Activated CD4-positive, alpha-beta memory T cell treated with anti-CD3 and anti-CD28 coated beads for 36 hours (primary cell): ENCODE measurements at regions of chr10 and their contacts with region 1.

Region 1: DNA sequence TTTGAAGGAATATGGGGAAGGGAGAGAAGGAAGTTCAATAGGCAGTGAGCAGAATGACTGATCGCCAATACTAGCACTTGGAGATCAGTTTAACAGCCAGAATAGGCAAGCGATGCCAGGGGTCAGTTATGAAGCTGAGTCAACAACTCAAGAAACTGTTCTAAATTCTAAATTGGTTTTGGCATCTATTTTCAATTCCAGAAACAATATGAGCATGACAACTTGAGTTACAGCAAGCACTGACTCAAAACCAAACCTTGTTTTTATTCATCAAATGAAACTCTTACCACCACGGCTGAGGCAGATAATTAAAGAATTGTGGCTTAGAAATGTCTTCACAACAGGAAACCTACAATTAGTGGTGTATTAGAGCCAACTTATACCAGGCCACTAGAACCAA is 180.5 kb upstream of the ASAH2 start:
- DNase-seq: peak; percentile 39
- H3K4me3 Mint-ChIP-seq: no peak overlapping the region
- H3K27ac Mint-ChIP-seq: no peak overlapping the region
- H3K4me1 Mint-ChIP-seq: peaks cover 31% of the 10 kb centered on the region
- H3K27me3 Mint-ChIP-seq: no peaks in the 10 kb centered on the region

Region 2: DNA sequence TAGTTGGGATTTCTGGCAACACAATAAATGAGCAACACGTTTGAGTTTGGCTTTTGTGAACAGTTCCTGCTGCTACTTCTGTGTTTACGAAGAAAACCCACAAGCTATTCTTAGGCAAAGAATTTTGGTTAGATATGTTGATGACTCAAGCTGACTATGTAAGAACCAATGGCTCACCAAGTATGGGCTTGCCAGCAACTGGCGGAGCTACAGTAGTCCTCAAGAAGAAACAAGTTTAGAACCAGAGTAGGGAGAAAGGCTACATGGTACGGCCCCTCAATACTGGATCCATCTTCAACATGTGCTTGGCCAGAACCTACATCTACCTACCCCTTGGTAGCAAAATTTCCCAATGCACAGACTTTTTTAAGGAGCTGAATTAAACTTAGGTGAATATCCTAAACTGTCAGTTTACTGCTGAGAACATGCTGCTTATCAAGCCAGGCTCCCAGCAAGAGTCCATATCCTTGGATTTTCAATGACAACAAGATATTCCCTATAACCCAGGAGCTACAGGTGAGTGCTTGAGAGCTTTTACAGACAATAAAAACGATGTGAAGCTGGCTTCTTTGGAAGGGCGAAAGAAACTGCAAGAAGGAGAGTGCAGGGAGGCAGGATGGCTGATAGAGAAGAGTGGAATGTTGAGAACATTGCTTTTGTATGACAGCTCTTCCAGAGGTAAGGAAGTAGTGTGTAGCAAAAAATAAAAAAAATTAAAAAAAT is 106.2 kb before region 1 on chr10:
- CTCF ChIA-PET with region 1: no interaction called
- POLR2A ChIA-PET with region 1: no interaction called
- intact Hi-C with region 1: loop called (anchors 5 kb)
- DNase-seq: no peak
- H3K4me3 Mint-ChIP-seq: no peak overlapping the region
- H3K27ac Mint-ChIP-seq: no peak overlapping the region
- H3K4me1 Mint-ChIP-seq: peaks cover 7% of the 10 kb centered on the region
- H3K27me3 Mint-ChIP-seq: no peaks in the 10 kb centered on the region

Region 3: GRCh38 chr10:50396491-50397311 is 35.1 kb before region 1 on chr10:
- CTCF ChIA-PET with region 1: interaction called, 3 read pairs
- POLR2A ChIA-PET with region 1: interaction called, 5 read pairs
- intact Hi-C with region 1: loop called (anchors 1 kb)
- DNase-seq: peak; percentile 51
- H3K4me3 Mint-ChIP-seq: peak overlapping the region; percentile 17
- H3K27ac Mint-ChIP-seq: peak overlapping the region; percentile 65
- H3K4me1 Mint-ChIP-seq: peaks cover 46% of the 10 kb centered on the region
- H3K27me3 Mint-ChIP-seq: no peaks in the 10 kb centered on the region

Region 4: GRCh38 chr10:50417886-50418830 is 13.6 kb before region 1 on chr10:
- CTCF ChIA-PET with region 1: interaction called, 3 read pairs
- POLR2A ChIA-PET with region 1: no interaction called
- intact Hi-C with region 1: loop called (anchors 1 kb)
- DNase-seq: peak; percentile 62
- H3K4me3 Mint-ChIP-seq: peak overlapping the region; percentile 80
- H3K27ac Mint-ChIP-seq: no peak overlapping the region
- H3K4me1 Mint-ChIP-seq: peaks cover 32% of the 10 kb centered on the region
- H3K27me3 Mint-ChIP-seq: no peaks in the 10 kb centered on the region

Region 5: DNA sequence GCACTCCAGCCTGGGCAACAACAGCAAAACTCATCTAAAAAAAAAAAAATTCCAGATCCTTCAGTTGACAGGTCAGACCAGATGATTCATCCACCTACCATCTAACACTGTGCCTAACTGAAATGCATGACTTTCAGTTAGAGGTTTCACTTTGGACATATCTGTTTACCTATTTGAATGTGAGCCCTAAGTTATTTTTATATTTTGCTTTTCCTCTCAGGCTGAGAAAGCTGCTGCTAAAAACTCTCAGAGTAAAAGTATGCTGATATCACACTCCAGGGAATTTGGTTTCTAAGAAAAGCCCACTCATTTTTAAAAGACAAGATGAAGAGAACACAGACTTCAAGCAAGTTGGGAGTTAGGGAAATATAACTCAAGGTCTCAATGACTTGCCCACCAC is 66.0 kb after region 1 on chr10:
- CTCF ChIA-PET with region 1: no interaction called
- POLR2A ChIA-PET with region 1: interaction called, 3 read pairs
- intact Hi-C with region 1: loop called (anchors 1 kb)
- DNase-seq: no peak
- H3K4me3 Mint-ChIP-seq: no peak overlapping the region
- H3K27ac Mint-ChIP-seq: peak overlapping the region; percentile 57
- H3K4me1 Mint-ChIP-seq: peaks cover 40% of the 10 kb centered on the region
- H3K27me3 Mint-ChIP-seq: no peaks in the 10 kb centered on the region

Region 6: GRCh38 chr10:50508315-50509051 is 76.7 kb after region 1 on chr10:
- CTCF ChIA-PET with region 1: interaction called, 11 read pairs
- POLR2A ChIA-PET with region 1: interaction called, 5 read pairs
- intact Hi-C with region 1: loop called (anchors 1 kb)
- DNase-seq: peak; percentile 79
- H3K4me3 Mint-ChIP-seq: no peak overlapping the region
- H3K27ac Mint-ChIP-seq: no peak overlapping the region
- H3K4me1 Mint-ChIP-seq: peaks cover 68% of the 10 kb centered on the region
- H3K27me3 Mint-ChIP-seq: peaks cover 5% of the 10 kb centered on the region

Region 7: DNA sequence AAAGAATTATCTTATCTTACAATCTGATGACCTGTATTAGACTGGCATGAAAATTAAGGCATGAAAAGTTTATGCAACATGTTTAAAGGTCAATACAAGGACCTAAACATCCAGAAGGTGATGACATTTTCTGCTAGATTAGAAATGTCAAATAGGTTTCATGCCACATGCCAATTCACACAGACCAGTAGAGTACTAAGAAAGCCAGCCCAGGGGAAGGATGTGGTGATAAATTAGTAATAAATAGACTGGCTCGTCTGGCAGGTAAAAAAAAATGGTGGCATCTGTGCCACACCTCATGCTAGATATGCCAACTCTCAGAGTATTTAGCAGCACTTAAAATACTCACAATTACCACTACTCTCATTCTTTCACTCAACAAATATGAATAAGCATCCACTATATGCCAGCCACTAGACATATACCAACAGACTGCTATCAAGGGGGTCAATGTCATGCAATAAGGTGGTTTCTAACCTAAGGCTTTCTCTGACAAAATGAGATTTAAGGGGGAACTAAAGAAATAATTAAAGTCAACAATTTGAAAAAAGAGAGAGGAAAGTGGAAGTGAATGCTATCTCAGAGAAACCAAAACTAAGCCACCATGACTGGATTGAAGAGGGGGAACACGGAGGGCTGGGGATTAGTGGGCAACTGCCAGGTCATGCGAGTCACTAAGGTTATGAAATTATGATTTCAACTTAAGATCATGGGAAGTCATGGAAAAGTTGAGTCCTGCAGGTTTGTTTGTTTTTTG is 108.5 kb after region 1 on chr10:
- CTCF ChIA-PET with region 1: no interaction called
- POLR2A ChIA-PET with region 1: interaction called, 3 read pairs
- intact Hi-C with region 1: loop called (anchors 1 kb)
- DNase-seq: peak; percentile 70
- H3K4me3 Mint-ChIP-seq: peak overlapping the region; percentile 36
- H3K27ac Mint-ChIP-seq: peak overlapping the region; percentile 75
- H3K4me1 Mint-ChIP-seq: peaks cover 86% of the 10 kb centered on the region
- H3K27me3 Mint-ChIP-seq: no peaks in the 10 kb centered on the region

Region 8: DNA sequence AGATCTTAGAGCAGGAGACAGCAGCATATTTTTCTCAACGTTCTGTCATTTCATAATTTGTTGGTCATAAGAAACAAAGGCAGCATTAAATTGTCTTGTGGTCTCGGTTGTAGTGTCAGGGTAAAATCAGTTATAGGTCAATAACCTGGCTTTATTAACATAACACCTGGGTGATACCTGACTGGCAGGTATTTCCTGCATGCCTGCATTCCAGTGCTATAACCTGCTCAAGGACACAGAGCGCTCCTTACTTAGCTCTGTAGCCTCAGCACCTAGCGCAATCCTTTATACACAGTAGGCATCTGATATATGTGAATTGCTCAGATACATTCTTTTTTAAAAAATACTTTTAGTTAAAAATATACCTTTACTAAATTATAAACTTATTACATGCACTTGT is 603.5 kb after region 1 on chr10:
- CTCF ChIA-PET with region 1: no interaction called
- POLR2A ChIA-PET with region 1: no interaction called
- intact Hi-C with region 1: no loop called
- DNase-seq: no peak
- H3K4me3 Mint-ChIP-seq: no peak overlapping the region
- H3K27ac Mint-ChIP-seq: no peak overlapping the region
- H3K4me1 Mint-ChIP-seq: no peaks in the 10 kb centered on the region
- H3K27me3 Mint-ChIP-seq: no peaks in the 10 kb centered on the region